ENCODE measurements at regions of chr18 and their contacts with region 1.

Region 1: GRCh38 chr18:1464444-1465217 is 560.0 kb downstream of the ADCYAP1 start:
- DNase-seq: no peak
- H3K4me3 ChIP-seq: no peak overlapping the region
- H3K27ac ChIP-seq: no peak overlapping the region
- H3K27me3 ChIP-seq: peaks cover 0 to 4% (median 0%) of the 10 kb centered on the region in 45 donors
- CTCF ChIP-seq: no peak

Region 2: DNA sequence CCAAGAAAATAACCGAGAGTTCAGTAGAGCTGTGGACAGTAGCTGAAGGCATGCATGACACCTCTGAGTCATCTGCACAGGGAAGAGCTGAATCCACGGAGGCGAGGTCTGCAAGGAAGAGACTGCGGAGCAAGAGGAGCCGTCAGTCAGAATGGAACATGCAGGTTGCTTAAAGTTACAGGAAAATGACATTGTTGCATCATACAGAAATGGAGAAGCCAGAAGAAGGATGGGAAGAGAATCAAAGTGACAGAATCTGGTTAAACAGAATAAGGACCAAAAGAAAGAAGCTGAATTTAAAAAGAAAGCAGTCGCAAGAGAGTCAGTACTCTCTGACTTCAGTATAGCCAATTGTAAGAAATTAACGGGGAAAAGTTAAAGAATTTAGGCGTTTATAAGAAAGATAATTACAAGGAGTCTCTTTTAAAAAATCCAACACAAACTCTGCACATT is 26.1 kb before region 1 on chr18:
- intact Hi-C with region 1: loop called in 1 of 2 experiments (anchors 2 kb)
- DNase-seq: no peak
- H3K4me3 ChIP-seq: no peak overlapping the region
- H3K27ac ChIP-seq: no peak overlapping the region
- H3K27me3 ChIP-seq: peaks cover 0 to 9% (median 0%) of the 10 kb centered on the region in 45 donors
- CTCF ChIP-seq: no peak